Activated B cell treated with CpG ODN at 0.5 μM for 24 hours (primary cell): ENCODE measurements at regions of chr6 and their contacts with region 1.

Region 1: DNA sequence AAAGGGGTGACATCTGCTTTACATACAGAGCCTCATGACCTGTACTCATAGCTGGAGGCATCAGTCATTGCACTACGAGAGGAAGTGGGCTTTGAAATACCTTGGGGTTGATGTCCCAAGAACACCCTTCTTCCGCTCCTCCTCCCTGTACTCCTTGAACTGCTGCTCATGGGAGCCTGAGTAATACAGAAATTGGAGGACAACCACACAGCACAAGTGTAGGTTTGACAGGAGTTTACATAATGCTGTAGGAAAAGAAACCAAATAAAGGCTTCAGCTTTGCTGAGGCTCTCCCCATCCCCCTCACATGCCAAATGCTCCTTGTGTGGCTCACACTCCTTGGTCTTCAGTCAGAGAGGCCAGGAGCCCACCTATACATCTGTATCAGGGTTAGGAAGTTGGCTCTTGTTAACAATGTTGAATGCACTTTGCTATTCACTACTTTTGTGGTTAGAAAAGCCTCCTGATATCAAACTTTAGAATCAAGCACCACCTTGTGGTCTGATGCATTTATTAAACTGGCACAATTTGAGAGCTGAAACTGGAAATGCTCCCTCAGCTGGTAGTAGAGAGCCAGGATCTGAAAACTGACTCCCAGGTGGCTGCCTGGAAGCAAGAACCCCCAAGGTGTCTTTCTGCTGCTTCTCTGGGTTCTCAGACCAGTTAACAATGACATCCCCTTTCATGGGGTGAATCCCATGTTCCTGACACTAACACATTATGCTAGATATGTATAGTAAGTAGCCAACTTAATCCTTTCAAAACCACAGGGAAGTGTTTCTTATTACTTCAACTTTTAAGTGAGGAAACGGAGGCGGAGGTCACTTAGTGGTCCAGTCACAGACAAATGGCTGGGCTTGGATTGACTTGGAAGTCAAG is 56.2 kb upstream of the EDN1 start:
- DNase-seq: peak; percentile 15
- ATAC-seq: peak; percentile 62
- H3K4me3 Mint-ChIP-seq: no peak overlapping the region
- H3K27ac Mint-ChIP-seq: no peak overlapping the region
- H3K4me1 Mint-ChIP-seq: peaks cover 14% of the 10 kb centered on the region
- H3K27me3 Mint-ChIP-seq: no peaks in the 10 kb centered on the region
- CTCF ChIP-seq: no peak

Region 2: DNA sequence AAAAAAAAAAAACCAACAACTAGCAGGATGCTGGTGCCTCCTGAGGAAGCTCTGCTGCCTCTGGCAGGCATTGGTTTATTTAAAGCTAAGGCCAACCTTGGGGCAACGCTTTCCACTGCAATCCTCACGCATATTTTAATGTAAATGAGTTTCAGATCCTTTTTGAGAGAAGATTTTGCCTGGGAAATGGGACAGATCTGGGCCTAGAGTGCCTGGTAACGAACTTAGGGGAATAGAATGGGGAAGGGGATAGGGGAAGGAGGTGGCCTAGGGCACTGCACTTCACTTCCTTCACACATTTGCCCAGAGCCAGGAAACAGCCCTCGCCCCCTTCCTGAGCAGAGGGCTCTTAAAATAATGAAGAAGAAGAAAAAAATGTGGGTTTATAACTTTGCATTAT is 829.1 kb before region 1 on chr6:
- CTCF ChIA-PET with region 1: no interaction called
- POLR2A ChIA-PET with region 1: no interaction called
- intact Hi-C with region 1: no loop called
- DNase-seq: no peak
- ATAC-seq: peak; percentile 47
- H3K4me3 Mint-ChIP-seq: peak overlapping the region; percentile 39
- H3K27ac Mint-ChIP-seq: peak overlapping the region; percentile 79
- H3K4me1 Mint-ChIP-seq: peaks cover 55% of the 10 kb centered on the region
- H3K27me3 Mint-ChIP-seq: no peaks in the 10 kb centered on the region
- CTCF ChIP-seq: no peak

Region 3: DNA sequence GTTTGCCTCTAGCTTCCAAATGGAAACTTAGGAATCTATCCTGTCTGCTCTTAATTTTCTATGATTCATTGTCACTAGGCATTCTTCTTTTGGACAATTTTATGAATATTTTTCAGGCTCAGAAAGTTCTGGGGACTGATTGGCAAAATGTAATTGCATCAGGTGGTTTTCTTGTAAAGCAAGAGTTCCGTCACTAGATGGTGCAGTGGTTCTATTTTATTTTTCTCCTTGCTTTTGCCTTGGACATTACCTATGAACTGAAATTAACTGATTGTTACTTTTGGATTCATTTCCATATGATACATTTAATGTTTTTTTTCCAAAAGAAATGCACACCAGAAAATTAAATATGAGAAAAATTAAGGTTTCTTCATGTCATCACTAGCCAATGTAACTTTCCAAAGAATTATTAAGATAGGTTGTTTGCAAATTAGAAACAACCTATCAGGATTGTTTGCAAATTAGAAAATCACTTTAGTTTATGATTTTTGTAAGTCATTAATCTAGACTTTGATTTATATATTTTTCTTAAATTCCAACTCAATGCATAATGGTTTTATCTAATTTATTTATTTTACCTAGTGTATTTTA is 648.4 kb before region 1 on chr6:
- CTCF ChIA-PET with region 1: no interaction called
- POLR2A ChIA-PET with region 1: no interaction called
- intact Hi-C with region 1: loop called (anchors 1 kb)
- DNase-seq: no peak
- ATAC-seq: no peak
- H3K4me3 Mint-ChIP-seq: no peak overlapping the region
- H3K27ac Mint-ChIP-seq: no peak overlapping the region
- H3K4me1 Mint-ChIP-seq: no peaks in the 10 kb centered on the region
- H3K27me3 Mint-ChIP-seq: peaks cover 11% of the 10 kb centered on the region
- CTCF ChIP-seq: no peak

Region 4: GRCh38 chr6:11675601-11676000 is 558.3 kb before region 1 on chr6:
- CTCF ChIA-PET with region 1: no interaction called
- POLR2A ChIA-PET with region 1: no interaction called
- intact Hi-C with region 1: loop called (anchors 1 kb)
- DNase-seq: no peak
- ATAC-seq: peak; percentile 50
- H3K4me3 Mint-ChIP-seq: no peak overlapping the region
- H3K27ac Mint-ChIP-seq: no peak overlapping the region
- H3K4me1 Mint-ChIP-seq: no peaks in the 10 kb centered on the region
- H3K27me3 Mint-ChIP-seq: peaks cover 3% of the 10 kb centered on the region
- CTCF ChIP-seq: no peak

Region 5: DNA sequence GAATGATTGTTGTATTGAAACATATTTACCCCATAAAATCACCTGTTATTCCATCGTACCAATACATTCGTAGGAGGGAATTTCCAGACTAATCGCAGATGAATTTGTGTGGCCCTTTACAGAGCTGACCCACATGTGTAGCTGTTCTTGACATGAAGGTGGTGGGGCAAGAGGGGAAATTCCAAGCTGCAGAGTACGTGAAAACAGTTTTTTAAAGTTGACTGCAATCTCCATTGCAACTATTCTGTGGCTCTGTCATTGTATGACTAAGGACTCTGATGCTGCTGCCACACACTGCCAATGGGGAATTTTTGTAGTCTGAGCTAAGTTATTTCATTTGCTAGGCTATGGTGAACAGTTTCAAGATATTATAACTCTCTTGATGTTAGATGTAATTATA is 408.9 kb before region 1 on chr6:
- CTCF ChIA-PET with region 1: interaction called, 20 read pairs
- POLR2A ChIA-PET with region 1: no interaction called
- intact Hi-C with region 1: loop called (anchors 1 kb)
- DNase-seq: no peak
- ATAC-seq: peak; percentile 83
- H3K4me3 Mint-ChIP-seq: peak overlapping the region; percentile 36
- H3K27ac Mint-ChIP-seq: peak overlapping the region; percentile 64
- H3K4me1 Mint-ChIP-seq: peaks cover 42% of the 10 kb centered on the region
- H3K27me3 Mint-ChIP-seq: no peaks in the 10 kb centered on the region
- CTCF ChIP-seq: no peak

Region 6: GRCh38 chr6:12075067-12075563 is 158.8 kb before region 1 on chr6:
- CTCF ChIA-PET with region 1: interaction called, 7 read pairs
- POLR2A ChIA-PET with region 1: no interaction called
- intact Hi-C with region 1: loop called (anchors 5 kb)
- DNase-seq: no peak
- ATAC-seq: peak; percentile 25
- H3K4me3 Mint-ChIP-seq: no peak overlapping the region
- H3K27ac Mint-ChIP-seq: no peak overlapping the region
- H3K4me1 Mint-ChIP-seq: peaks cover 33% of the 10 kb centered on the region
- H3K27me3 Mint-ChIP-seq: no peaks in the 10 kb centered on the region
- CTCF ChIP-seq: no peak

Region 7: DNA sequence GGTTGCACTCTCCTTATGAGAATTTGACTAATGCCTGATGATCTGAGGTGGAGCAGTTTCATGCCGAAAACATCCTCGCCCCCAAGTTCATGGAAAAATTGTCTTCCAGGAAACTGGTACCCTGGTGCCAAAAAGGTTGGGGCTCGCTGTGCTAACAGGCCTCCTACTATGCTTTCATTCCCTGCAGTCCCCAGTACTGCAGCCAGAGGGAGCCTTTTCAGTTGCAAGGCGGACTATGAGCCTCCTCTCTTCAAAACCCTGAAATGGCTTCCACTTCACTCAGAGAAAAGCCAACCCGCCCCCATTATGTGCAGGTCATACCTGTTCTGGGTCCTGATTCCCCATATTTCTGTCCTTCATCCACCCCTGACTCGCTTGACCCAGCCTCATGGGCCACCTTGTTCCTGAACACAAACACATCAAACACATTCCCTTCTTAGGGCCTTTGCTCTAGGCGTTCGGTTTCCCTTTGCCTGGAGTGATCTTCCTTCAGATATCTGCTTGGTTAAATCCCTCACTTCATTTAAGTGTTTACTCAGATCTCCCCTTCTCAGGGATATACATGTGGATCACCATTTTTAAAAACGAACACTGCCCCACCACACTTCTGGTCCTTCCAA is 656.3 kb after region 1 on chr6:
- CTCF ChIA-PET with region 1: interaction called, 4 read pairs
- POLR2A ChIA-PET with region 1: no interaction called
- intact Hi-C with region 1: loop called (anchors 1 kb)
- DNase-seq: no peak
- ATAC-seq: no peak
- H3K4me3 Mint-ChIP-seq: no peak overlapping the region
- H3K27ac Mint-ChIP-seq: no peak overlapping the region
- H3K4me1 Mint-ChIP-seq: peaks cover 3% of the 10 kb centered on the region
- H3K27me3 Mint-ChIP-seq: peaks cover 5% of the 10 kb centered on the region
- CTCF ChIP-seq: no peak